Prostate gland (tissue), 2 donors: ENCODE measurements at regions of chr19 and their contacts with region 1.

Region 1: GRCh38 chr19:16572332-16573211 is at the start of gene SLC35E1:
- DNase-seq: peak; percentile 97
- H3K4me3 ChIP-seq: peak within 1 kb of the TSS; percentile 76 to 86
- H3K27ac ChIP-seq: peak within 1 kb of the TSS; percentile 84 to 86
- H3K4me1 ChIP-seq: peaks cover 21% of the 10 kb centered on the region
- H3K27me3 ChIP-seq: no peaks in the 10 kb centered on the region
- CTCF ChIP-seq: peak in 1 of 4 experiments; percentile 3
- POLR2A ChIP-seq: peak; percentile 85
- total RNA-seq, gene SLC35E1: 42.0 to 69.1 TPM

Region 2: DNA sequence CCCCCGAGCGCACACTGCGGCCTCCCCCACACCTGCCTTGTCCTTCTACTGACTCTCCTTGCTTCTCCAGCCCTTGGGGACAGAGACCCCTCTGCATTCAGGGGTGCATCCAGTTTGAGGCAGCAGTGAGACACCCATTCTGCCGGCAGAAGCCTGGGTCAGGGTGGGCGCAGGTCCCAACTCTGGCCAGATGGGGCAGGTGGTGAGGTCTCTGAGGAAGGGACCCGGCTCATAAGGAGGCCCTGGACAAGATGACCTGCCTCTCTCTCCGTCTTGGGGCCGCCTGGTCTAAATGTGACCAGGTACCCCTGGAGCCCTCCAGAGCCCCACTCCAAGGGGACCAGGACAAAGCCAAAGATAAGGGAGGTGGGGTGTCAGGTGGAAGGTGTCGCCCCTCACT is 36.4 kb before region 1 on chr19:
- intact Hi-C with region 1: no loop called
- DNase-seq: no peak
- H3K4me3 ChIP-seq: no peak overlapping the region
- H3K27ac ChIP-seq: no peak overlapping the region
- H3K4me1 ChIP-seq: peaks cover 9% of the 10 kb centered on the region
- H3K27me3 ChIP-seq: no peaks in the 10 kb centered on the region
- CTCF ChIP-seq: no peak
- POLR2A ChIP-seq: no peak

Region 3: GRCh38 chr19:16548956-16549355 is 23.6 kb before region 1 on chr19:
- intact Hi-C with region 1: no loop called
- DNase-seq: no peak
- H3K4me3 ChIP-seq: no peak overlapping the region
- H3K27ac ChIP-seq: no peak overlapping the region
- H3K4me1 ChIP-seq: peaks cover 3% of the 10 kb centered on the region
- H3K27me3 ChIP-seq: no peaks in the 10 kb centered on the region
- CTCF ChIP-seq: no peak
- POLR2A ChIP-seq: no peak

Region 4: DNA sequence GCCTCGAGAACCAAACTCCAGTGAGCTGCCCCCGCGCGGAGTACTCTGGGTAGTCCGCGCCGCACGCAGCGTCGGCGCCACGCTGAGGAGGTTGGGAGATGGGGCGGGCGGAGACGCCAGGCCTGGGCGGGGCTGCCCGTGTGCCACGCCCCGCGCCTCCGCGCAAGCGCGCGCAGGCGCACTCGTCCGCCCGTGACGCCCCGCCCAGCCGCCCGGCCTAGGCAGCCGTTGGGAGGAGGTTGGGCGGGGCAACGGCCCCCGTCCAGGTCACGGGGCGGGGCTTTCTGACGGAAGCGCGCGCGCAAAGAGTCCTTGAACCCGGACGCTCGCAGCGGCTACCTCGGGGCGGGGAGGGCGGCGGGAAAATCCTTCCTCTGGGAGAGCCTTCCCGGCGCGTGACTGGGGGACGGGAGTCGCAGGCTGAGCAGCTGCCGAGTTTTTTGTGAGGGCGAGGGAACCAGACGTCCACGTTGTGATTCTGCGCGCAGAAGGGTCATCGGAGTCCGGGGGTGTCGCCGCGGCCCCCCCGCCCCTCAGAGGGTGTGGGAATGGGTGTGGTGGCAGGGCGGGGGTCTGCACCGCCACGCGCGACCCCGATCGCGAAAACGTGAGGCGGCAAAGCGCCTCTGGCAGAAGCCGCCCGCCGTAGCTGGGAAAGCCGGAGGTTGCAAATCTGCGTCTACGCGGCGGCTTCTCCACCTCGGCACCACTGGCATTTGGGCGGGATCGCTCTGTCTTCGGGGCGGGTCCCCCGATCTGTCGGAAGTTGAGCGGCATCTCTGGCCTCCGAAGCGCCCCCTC is 55.8 kb after region 1 on chr19 and contains the start of gene MED26:
- intact Hi-C with region 1: loop called (anchors 5 kb)
- DNase-seq: peak; percentile 93
- H3K4me3 ChIP-seq: peak within 1 kb of the TSS; percentile 89 to 95
- H3K27ac ChIP-seq: peak within 1 kb of the TSS; percentile 98 to 99
- H3K4me1 ChIP-seq: peaks cover 8% of the 10 kb centered on the region
- H3K27me3 ChIP-seq: no peaks in the 10 kb centered on the region
- CTCF ChIP-seq: peak in 3 of 4 experiments; percentile 29 to 64 (median 43)
- POLR2A ChIP-seq: peak; percentile 77
- total RNA-seq, gene MED26: 13.5 to 29.9 TPM